ENCODE measurements at regions of chr9 and their contacts with region 1.

Region 1: GRCh38 chr9:109110326-109111021 is 9.3 kb downstream of the TMEM245 start:
- DNase-seq: no peak
- H3K4me3 Mint-ChIP-seq: peak overlapping the region; percentile 36
- H3K27ac Mint-ChIP-seq: peak overlapping the region; percentile 73
- H3K4me1 Mint-ChIP-seq: peaks cover 39% of the 10 kb centered on the region
- H3K27me3 Mint-ChIP-seq: no peaks in the 10 kb centered on the region
- CTCF ChIP-seq: no peak

Region 2: GRCh38 chr9:109035684-109036423 is 74.6 kb before region 1 on chr9:
- CTCF ChIA-PET with region 1: no interaction called
- intact Hi-C with region 1: loop called (anchors 2 kb)
- DNase-seq: peak; percentile 38
- H3K4me3 Mint-ChIP-seq: no peak overlapping the region
- H3K27ac Mint-ChIP-seq: no peak overlapping the region
- H3K4me1 Mint-ChIP-seq: peaks cover 35% of the 10 kb centered on the region
- H3K27me3 Mint-ChIP-seq: no peaks in the 10 kb centered on the region
- CTCF ChIP-seq: no peak

Region 3: DNA sequence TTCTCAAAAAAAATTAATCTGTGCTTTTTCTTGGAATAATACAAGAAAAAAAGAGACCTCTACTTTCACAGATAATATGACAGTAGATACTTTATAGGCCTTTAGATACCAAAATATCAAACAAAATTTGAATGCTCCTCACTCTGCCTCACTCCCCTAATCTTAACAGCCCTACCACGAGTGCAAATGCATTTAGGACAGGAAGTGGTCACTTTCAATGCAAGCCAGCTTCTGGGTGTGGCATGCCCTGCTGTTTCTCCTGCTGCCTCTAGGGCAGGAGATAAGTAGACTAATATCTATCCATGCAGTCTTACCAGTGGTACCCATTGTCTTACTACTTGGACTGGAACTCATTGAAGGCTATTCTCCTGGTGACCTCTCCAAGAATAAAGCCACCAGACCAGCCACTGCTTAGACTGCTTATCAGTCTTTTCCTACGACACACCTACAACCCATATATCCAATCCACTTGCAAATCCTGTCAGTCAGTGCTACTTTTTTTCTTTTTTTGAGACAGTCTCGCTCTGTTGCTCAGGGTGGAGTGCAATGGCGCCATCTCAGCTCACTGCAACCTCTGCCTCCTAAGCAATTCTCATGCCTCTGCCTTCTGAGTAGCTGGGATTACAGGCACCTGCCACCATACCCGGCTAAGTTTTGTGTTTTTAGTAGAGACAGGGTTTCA is 33.5 kb after region 1 on chr9:
- CTCF ChIA-PET with region 1: no interaction called
- intact Hi-C with region 1: no loop called
- DNase-seq: peak; percentile 25
- H3K4me3 Mint-ChIP-seq: no peak overlapping the region
- H3K27ac Mint-ChIP-seq: no peak overlapping the region
- H3K4me1 Mint-ChIP-seq: no peaks in the 10 kb centered on the region
- H3K27me3 Mint-ChIP-seq: no peaks in the 10 kb centered on the region
- CTCF ChIP-seq: peak; percentile 22

Region 4: DNA sequence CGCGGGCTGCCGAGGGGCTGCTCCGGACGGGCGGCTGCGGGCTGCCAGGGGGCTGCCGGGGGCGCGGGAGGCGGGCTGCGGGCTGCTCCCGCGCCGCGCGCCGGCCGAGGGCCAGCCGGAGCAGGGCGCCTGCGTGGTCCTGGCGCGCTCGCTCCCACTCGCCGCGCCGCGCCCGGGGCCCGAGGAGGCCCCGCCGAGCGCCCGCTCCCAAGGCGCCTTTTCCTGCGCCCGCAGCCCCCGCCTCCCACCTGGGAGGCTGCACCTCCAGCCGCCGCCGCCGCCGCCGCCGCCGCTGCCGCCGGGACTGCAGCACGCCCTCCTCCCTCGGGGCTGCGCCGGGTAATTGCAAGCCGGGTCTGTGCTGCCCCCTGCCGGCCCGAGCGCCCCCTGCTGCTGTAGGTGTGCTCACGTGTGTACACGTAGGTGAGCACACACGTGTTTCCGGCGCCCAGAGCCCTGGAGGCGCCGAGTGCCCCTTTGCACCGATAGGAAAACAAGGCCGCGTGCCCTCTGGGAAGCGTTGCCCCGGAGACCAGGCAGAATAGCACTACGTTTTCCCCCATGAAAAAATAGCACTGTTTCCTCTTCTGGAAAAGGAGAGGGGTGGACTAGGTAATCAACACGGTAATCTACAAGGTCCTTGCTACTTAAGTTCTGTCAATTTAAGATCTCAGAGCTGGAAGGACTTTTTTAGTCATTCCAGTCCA is 210.4 kb after region 1 on chr9 and contains the start of gene EPB41L4B:
- CTCF ChIA-PET with region 1: no interaction called
- intact Hi-C with region 1: no loop called
- DNase-seq: peak; percentile 95
- H3K4me3 Mint-ChIP-seq: peak within 1 kb of the TSS; percentile 80
- H3K27ac Mint-ChIP-seq: peak within 1 kb of the TSS; percentile 80
- H3K4me1 Mint-ChIP-seq: peaks cover 27% of the 10 kb centered on the region
- H3K27me3 Mint-ChIP-seq: no peaks in the 10 kb centered on the region
- CTCF ChIP-seq: peak; percentile 80
- total RNA-seq, gene EPB41L4B: 4.6 and 5.8 TPM in 2 replicates